ENCODE measurements at regions of chr10 and their contacts with region 1.

Region 1: GRCh38 chr10:44932517-44933450 is 21.6 kb downstream of the TMEM72 start:
- DNase-seq: peak; percentile 75 to 88 (median 84)
- H3K4me3 ChIP-seq: no peak overlapping the region
- H3K27ac ChIP-seq: no peak overlapping the region
- H3K4me1 ChIP-seq: peaks cover 5 to 25% (median 23%) of the 10 kb centered on the region in 4 experiments
- H3K27me3 ChIP-seq: no peaks in the 10 kb centered on the region

Region 2: GRCh38 chr10:44850356-44850934 is 82.3 kb before region 1 on chr10:
- CTCF ChIA-PET with region 1: no interaction called
- POLR2A ChIA-PET with region 1: no interaction called
- DNase-seq: no peak
- H3K4me3 ChIP-seq: no peak overlapping the region
- H3K27ac ChIP-seq: no peak overlapping the region
- H3K4me1 ChIP-seq: no peaks in the 10 kb centered on the region
- H3K27me3 ChIP-seq: no peaks in the 10 kb centered on the region

Region 3: DNA sequence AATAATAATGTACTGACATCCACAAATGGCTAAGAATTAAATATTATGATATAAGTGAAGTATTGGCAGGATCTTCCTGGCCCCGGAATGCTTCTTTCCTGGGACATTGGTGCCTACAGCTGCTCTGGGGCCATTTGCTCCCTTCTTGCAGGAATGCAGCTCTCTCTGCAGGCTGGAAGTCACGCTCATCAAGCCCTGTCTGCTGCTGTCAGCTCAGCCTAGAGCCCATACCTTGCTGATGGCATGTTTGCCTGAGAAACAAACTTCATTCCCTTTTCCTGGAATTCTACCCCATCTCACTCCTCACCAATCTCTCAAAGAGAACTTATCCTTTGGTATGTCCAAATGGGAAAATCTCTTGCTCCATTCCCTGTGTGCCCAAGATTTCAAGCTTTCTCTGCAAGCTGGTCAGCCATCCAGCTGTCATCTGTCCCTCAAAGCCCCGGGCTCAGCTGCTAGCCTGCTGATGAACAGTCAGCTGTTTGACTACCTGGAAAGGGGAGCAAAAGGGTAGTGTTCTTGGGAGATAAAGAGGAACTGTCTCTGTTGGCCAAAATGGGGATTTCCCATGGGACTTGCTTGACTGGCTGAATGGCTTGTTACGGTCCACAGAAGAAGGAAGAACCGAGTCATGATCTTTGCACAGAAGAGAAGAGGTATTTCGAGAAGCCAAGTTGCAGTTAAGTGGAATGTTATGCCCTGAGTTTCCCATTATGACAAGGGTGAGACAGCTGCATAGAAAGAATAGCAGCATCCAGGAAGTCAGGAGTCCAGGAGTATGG is 14.8 kb after region 1 on chr10:
- CTCF ChIA-PET with region 1: interaction called, 70 read pairs
- POLR2A ChIA-PET with region 1: no interaction called
- DNase-seq: peak in 2 of 3 donors; percentile 34 to 38
- H3K4me3 ChIP-seq: no peak overlapping the region
- H3K27ac ChIP-seq: no peak overlapping the region
- H3K4me1 ChIP-seq: peaks cover 13 to 31% (median 18%) of the 10 kb centered on the region in 4 experiments
- H3K27me3 ChIP-seq: no peaks in the 10 kb centered on the region

Region 4: DNA sequence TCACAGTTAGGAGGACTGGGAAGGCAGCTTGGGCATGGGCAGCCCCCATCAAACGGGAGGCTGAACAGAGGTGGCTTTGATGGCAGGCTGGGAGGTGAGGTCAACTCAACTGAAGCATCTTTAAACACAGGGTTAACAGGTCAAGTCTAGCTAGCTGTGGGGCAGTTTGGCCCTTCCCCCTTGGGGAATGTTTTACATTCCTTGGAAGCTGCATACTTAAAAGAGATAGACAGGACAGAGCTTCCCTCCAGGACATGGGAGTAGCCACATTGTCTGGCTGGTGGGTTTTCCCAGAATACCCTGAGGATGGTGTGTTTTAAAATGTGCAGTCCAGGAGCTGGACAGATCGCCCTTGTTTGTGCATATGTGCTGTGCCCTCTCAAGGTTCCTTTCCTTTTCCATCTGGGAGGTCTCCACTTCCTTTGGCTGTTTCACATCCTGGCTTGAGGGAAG is 20.0 kb after region 1 on chr10:
- CTCF ChIA-PET with region 1: interaction called, 70 read pairs
- POLR2A ChIA-PET with region 1: no interaction called
- DNase-seq: no peak
- H3K4me3 ChIP-seq: no peak overlapping the region
- H3K27ac ChIP-seq: no peak overlapping the region
- H3K4me1 ChIP-seq: peaks cover 12 to 19% (median 16%) of the 10 kb centered on the region in 4 experiments
- H3K27me3 ChIP-seq: no peaks in the 10 kb centered on the region

Region 5: GRCh38 chr10:44962870-44963738 is 30.3 kb after region 1 on chr10:
- CTCF ChIA-PET with region 1: interaction called, 40 read pairs
- POLR2A ChIA-PET with region 1: no interaction called
- DNase-seq: peak in 2 of 3 donors; percentile 42 to 50
- H3K4me3 ChIP-seq: no peak overlapping the region
- H3K27ac ChIP-seq: no peak overlapping the region
- H3K4me1 ChIP-seq: peaks cover 19 to 77% (median 40%) of the 10 kb centered on the region in 4 experiments
- H3K27me3 ChIP-seq: no peaks in the 10 kb centered on the region

Region 6: GRCh38 chr10:44974628-44975431 is 42.0 kb after region 1 on chr10:
- CTCF ChIA-PET with region 1: interaction called, 40 read pairs
- POLR2A ChIA-PET with region 1: interaction called, 3 read pairs
- DNase-seq: peak in 2 of 3 donors; percentile 61 to 62
- H3K4me3 ChIP-seq: peak overlapping the region in 5 of 7 experiments; percentile 49 to 73 (median 59)
- H3K27ac ChIP-seq: no peak overlapping the region
- H3K4me1 ChIP-seq: peaks cover 4 to 67% (median 61%) of the 10 kb centered on the region in 4 experiments
- H3K27me3 ChIP-seq: no peaks in the 10 kb centered on the region

Region 7: GRCh38 chr10:44990302-44990655 is 57.5 kb after region 1 on chr10:
- CTCF ChIA-PET with region 1: interaction called, 84 read pairs
- POLR2A ChIA-PET with region 1: no interaction called
- DNase-seq: peak; percentile 62 to 73 (median 69)
- H3K4me3 ChIP-seq: no peak overlapping the region
- H3K27ac ChIP-seq: no peak overlapping the region
- H3K4me1 ChIP-seq: peaks cover 0 to 41% (median 22%) of the 10 kb centered on the region in 4 experiments
- H3K27me3 ChIP-seq: no peaks in the 10 kb centered on the region